HepG2 (cell line): ENCODE measurements at regions of chr7 and their contacts with region 1.

Region 1: GRCh38 chr7:134992626-134993179 is 6.4 kb downstream of the AGBL3 start:
- DNase-seq: no peak
- ATAC-seq: no peak
- H3K4me3 ChIP-seq: peak overlapping the region in 1 of 3 experiments; percentile 31; a peak in 1 of 6 replicates
- H3K27ac ChIP-seq: peak overlapping the region; percentile 96
- H3K4me1 ChIP-seq: peaks cover 93% of the 10 kb centered on the region
- H3K27me3 ChIP-seq: no peaks in the 10 kb centered on the region; a peak in 1 of 5 replicates
- CTCF ChIP-seq: no peak
- EP300 ChIP-seq: no peak
- POLR2A ChIP-seq: no peak
- RAD21 ChIP-seq: no peak

Region 2: DNA sequence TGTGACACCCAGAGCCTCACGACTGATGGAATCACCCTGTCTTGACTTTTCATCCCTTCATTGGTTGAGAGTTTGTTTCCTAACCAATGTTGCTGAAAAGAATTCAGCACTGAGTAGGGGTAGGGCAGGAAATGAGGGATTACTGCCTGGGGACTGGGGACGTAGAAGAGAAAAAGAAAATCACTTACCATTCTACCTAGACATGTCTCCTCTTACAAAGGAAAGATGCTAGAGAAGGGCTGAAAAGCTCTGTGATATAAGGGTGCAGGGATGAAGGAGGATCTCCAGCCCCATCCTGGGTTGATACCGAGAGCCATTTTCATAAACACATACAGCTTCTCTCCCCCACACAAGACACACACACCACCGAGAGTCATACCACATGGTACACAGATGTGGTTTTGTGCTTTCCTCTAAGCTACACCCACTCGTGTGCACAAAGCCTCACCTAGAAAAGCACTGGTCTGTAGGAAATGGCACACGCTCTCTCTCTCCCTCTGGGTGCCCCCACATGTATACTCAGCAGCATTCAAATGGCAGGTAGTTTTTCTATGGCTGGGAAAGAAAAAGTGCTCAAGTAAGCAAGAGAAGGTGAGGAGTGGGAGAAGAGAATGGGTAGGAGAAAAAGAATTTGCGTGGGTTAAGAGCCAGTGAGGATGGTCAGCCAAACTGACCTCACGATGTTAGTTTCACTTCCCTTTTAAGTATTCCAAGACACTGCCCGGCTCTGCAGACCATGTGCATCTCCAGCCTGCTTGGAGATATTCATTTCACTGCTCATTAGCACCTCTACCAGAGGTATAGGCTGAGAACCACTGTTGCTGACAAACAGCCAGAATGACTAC is 127.5 kb before region 1 on chr7:
- CTCF ChIA-PET with region 1: no interaction called
- POLR2A ChIA-PET with region 1: no interaction called
- in situ Hi-C with region 1: no loop called
- intact Hi-C with region 1: no loop called
- DNase-seq: no peak
- ATAC-seq: no peak; the same call in 2 of the 3 replicates
- H3K4me3 ChIP-seq: no peak overlapping the region
- H3K27ac ChIP-seq: no peak overlapping the region
- H3K4me1 ChIP-seq: no peaks in the 10 kb centered on the region
- H3K27me3 ChIP-seq: no peaks in the 10 kb centered on the region
- CTCF ChIP-seq: no peak
- EP300 ChIP-seq: no peak
- POLR2A ChIP-seq: no peak
- RAD21 ChIP-seq: no peak

Region 3: DNA sequence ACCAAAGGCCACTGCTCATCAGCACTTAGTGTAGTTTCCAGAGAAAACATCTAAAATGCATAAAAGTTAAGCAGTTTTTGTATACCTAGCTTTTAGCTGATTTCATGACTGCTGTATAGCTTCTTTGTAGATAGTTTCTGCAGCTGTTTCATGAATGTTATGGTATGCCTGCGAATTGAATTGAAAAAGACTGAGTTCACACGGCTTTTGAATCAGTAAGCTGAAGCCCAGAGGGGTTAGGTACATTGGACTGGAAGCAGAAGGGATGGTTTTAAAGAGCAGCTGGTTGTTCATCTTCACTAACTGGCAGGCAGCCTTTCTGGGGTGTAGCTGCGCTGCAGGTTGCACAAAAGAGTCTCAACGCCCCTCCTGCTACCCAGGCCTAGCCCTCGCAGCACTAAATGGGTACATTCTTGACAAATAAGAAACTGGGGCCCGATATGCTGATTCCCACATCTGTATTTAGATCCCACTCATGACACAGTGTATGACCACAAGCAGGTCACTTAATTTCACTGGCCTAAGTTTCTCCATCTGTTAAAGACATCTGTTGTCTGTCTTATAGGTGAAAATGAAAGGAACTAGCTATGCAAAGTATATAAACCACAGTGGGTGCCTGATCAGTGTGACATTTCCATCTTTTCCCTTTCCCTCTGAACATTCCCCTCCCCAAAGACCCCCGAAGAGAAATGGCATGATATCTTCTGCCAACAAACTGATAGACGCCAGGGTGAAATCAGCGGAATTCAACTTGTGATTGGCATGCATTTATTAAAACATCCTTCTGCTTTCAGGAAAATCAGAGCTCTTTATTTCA is 92.3 kb before region 1 on chr7:
- CTCF ChIA-PET with region 1: no interaction called
- POLR2A ChIA-PET with region 1: interaction called, 6 read pairs
- in situ Hi-C with region 1: no loop called
- intact Hi-C with region 1: loop called (anchors 5 kb)
- DNase-seq: no peak
- ATAC-seq: no peak
- H3K4me3 ChIP-seq: peak overlapping the region in 2 of 3 experiments; percentile 52 to 67; a peak in 1 of 6 replicates
- H3K27ac ChIP-seq: peak overlapping the region; percentile 98
- H3K4me1 ChIP-seq: peaks cover 96% of the 10 kb centered on the region
- H3K27me3 ChIP-seq: no peaks in the 10 kb centered on the region
- CTCF ChIP-seq: no peak
- EP300 ChIP-seq: no peak; a peak in 1 of 4 replicates
- POLR2A ChIP-seq: no peak
- RAD21 ChIP-seq: no peak

Region 4: GRCh38 chr7:135095229-135095849 is 102.6 kb after region 1 on chr7:
- CTCF ChIA-PET with region 1: no interaction called
- POLR2A ChIA-PET with region 1: no interaction called
- in situ Hi-C with region 1: no loop called
- intact Hi-C with region 1: loop called (anchors 2 kb)
- DNase-seq: no peak
- ATAC-seq: peak; percentile 28; the same call in 1 of the 3 replicates
- H3K4me3 ChIP-seq: peak overlapping the region in 1 of 3 experiments; percentile 6; a peak in 1 of 6 replicates
- H3K27ac ChIP-seq: no peak overlapping the region
- H3K4me1 ChIP-seq: peaks cover 31% of the 10 kb centered on the region
- H3K27me3 ChIP-seq: no peaks in the 10 kb centered on the region
- CTCF ChIP-seq: no peak
- EP300 ChIP-seq: 0 out of 4 replicates have a peak, but pooled peaks of 1 of the 2 experiments have one; percentile 9
- POLR2A ChIP-seq: no peak
- RAD21 ChIP-seq: no peak

Region 5: GRCh38 chr7:135217645-135218509 is 225.2 kb after region 1 on chr7:
- CTCF ChIA-PET with region 1: no interaction called
- POLR2A ChIA-PET with region 1: no interaction called
- in situ Hi-C with region 1: no loop called
- intact Hi-C with region 1: loop called (anchors 5 kb)
- DNase-seq: peak; percentile 77
- ATAC-seq: peak; percentile 87
- H3K4me3 ChIP-seq: peak overlapping the region in 2 of 3 experiments; percentile 36 to 47; a peak in 3 of 6 replicates
- H3K27ac ChIP-seq: peak overlapping the region; percentile 55
- H3K4me1 ChIP-seq: peaks cover 47% of the 10 kb centered on the region
- H3K27me3 ChIP-seq: no peaks in the 10 kb centered on the region
- CTCF ChIP-seq: no peak
- EP300 ChIP-seq: 0 out of 4 replicates have a peak, but pooled peaks of 1 of the 2 experiments have one; percentile 11
- POLR2A ChIP-seq: no peak
- RAD21 ChIP-seq: no peak